IMR-90 (cell line): ENCODE measurements at regions of chr14 and their contacts with region 1.

Region 1: GRCh38 chr14:28308734-28309133 is 457.9 kb upstream of the FOXG1 start:
- DNase-seq: no peak
- ATAC-seq: no peak
- H3K4me3 ChIP-seq: no peak overlapping the region
- H3K27ac ChIP-seq: no peak overlapping the region
- H3K4me1 ChIP-seq: no peaks in the 10 kb centered on the region
- H3K27me3 ChIP-seq: no peaks in the 10 kb centered on the region
- CTCF ChIP-seq: no peak
- POLR2A ChIP-seq: no peak
- RAD21 ChIP-seq: no peak

Region 2: GRCh38 chr14:27211741-27212140 is 1097.0 kb before region 1 on chr14:
- CTCF ChIA-PET with region 1: no interaction called
- POLR2A ChIA-PET with region 1: interaction called, 14 read pairs
- dilution Hi-C with region 1: no loop called
- in situ Hi-C with region 1: no loop called
- intact Hi-C with region 1: no loop called
- DNase-seq: no peak
- ATAC-seq: no peak
- H3K4me3 ChIP-seq: no peak overlapping the region
- H3K27ac ChIP-seq: no peak overlapping the region
- H3K4me1 ChIP-seq: no peaks in the 10 kb centered on the region
- H3K27me3 ChIP-seq: no peaks in the 10 kb centered on the region
- CTCF ChIP-seq: no peak
- POLR2A ChIP-seq: no peak
- RAD21 ChIP-seq: no peak

Region 3: DNA sequence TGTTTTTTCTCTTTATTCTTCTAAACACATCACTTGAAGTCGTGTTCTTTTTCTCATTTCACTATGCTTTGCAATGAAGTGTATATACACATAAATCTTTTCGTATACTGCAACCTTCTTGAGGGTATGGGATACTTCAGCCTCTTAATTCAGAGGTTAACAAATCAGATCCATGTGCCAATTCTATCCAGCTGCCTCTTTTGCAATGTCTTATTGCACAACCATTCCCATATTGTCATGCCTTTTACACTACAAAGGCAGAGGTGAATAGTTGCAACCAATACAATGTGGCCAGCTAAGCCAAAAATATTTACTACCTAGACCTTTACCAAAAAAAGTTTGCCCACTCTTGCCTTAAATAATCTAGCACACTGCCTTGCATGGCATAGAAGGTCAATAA is 233.3 kb after region 1 on chr14:
- CTCF ChIA-PET with region 1: no interaction called
- POLR2A ChIA-PET with region 1: no interaction called
- dilution Hi-C with region 1: no loop called
- in situ Hi-C with region 1: no loop called
- intact Hi-C with region 1: no loop called
- DNase-seq: no peak
- ATAC-seq: no peak
- H3K4me3 ChIP-seq: no peak overlapping the region
- H3K27ac ChIP-seq: no peak overlapping the region
- H3K4me1 ChIP-seq: no peaks in the 10 kb centered on the region
- H3K27me3 ChIP-seq: no peaks in the 10 kb centered on the region
- CTCF ChIP-seq: no peak
- POLR2A ChIP-seq: no peak
- RAD21 ChIP-seq: no peak